Activated CD4-positive, alpha-beta T cell treated with anti-CD3 and anti-CD28 coated beads, Interleukin-2, amount 10 ng/mL, durations not matched to agents 24 days and 14 days (primary cell): ENCODE measurements at regions of chrX and their contacts with region 1.

Region 1: GRCh38 chrX:136268051-136269048 is 17.1 kb upstream of the MAP7D3 start:
- DNase-seq: peak; percentile 83
- H3K4me3 Mint-ChIP-seq: no peak overlapping the region
- H3K27ac Mint-ChIP-seq: no peak overlapping the region
- H3K4me1 Mint-ChIP-seq: peaks cover 4% of the 10 kb centered on the region
- H3K27me3 Mint-ChIP-seq: no peaks in the 10 kb centered on the region

Region 2: DNA sequence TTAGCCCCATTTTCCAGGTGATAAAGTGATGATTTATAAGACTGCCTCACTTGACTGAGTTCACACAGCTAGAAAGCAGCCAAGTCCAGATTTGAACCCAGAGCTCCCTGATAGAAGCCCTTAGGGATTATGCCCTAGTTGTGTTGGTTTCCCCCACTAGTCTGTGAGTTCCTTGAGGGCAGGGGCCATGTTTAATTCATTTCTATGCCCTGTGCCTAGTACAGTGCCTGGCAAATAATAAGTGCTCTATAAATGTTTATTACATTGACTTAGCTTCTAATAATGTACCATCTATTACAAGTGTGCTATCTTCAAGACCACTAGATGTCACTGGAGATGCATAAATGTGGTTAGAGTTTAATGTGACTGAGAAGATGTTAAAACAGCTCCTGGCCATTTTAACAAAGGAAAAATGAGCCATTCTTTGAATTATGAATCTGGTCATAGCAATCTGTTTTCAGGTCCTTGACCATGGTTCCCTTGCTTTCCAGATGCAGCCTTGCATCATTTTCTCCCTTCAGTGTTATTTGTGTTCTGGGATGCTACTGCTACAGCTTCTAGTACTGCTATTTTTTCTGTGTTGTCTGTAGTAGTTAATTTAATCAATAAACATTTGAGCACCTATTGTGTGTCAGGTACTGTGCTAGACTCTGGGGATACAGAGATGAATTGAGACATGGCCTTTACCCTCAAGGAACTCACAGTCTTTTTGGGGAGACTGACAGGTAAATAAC is 239.9 kb before region 1 on chrX:
- intact Hi-C with region 1: loop called (anchors 2 kb)
- DNase-seq: peak; percentile 62
- H3K4me3 Mint-ChIP-seq: no peak overlapping the region
- H3K27ac Mint-ChIP-seq: no peak overlapping the region
- H3K4me1 Mint-ChIP-seq: no peaks in the 10 kb centered on the region
- H3K27me3 Mint-ChIP-seq: no peaks in the 10 kb centered on the region

Region 3: GRCh38 chrX:136039968-136040367 is 228.4 kb before region 1 on chrX:
- intact Hi-C with region 1: no loop called
- DNase-seq: no peak
- H3K4me3 Mint-ChIP-seq: no peak overlapping the region
- H3K27ac Mint-ChIP-seq: no peak overlapping the region
- H3K4me1 Mint-ChIP-seq: no peaks in the 10 kb centered on the region
- H3K27me3 Mint-ChIP-seq: no peaks in the 10 kb centered on the region

Region 4: GRCh38 chrX:136162831-136163570 is 105.3 kb before region 1 on chrX:
- intact Hi-C with region 1: loop called (anchors 10 kb)
- DNase-seq: peak; percentile 82
- H3K4me3 Mint-ChIP-seq: no peak overlapping the region
- H3K27ac Mint-ChIP-seq: no peak overlapping the region
- H3K4me1 Mint-ChIP-seq: peaks cover 7% of the 10 kb centered on the region
- H3K27me3 Mint-ChIP-seq: no peaks in the 10 kb centered on the region

Region 5: DNA sequence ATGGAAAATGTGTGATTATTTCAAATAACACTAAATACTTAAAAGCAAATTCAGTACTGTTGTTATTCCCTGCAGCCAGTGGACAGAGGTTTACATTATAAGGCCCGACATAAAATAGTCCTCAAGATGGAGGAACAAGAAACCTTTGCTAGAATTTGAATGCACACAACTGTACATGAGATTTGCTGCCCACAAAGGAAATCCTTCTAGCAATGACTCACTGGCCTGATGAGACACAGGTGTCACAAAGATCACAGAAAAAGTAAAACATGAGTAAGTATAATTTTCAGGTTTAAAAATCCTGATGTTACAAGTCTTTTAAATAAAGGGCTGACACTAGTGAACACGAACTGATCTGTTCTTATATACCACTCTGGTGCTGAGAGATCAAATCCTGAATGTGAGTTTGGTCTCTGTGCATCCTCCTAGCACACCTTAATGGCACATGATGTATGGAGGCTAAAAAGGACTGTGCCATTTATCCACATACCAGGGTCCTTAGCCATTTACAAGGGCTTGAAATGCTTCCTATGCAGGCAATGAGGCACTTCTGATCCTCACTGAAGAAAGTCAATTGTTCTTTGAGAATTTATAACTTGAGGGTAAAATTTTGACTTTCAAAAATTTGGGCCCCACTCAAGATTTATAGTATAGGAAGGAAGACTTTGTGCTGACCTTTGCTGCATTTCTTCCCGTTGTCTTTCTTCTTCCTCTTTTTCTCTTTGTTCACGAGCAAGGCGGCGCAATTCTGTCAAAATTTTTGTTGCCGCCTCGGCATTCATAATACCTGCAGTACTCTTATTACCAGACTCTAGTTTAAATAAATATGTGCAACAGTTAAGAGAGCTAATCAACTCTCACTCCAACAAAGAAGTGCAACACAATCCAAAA is 40.2 kb before region 1 on chrX:
- intact Hi-C with region 1: loop called (anchors 5 kb)
- DNase-seq: peak; percentile 64
- H3K4me3 Mint-ChIP-seq: peak overlapping the region; percentile 36
- H3K27ac Mint-ChIP-seq: peak overlapping the region; percentile 48
- H3K4me1 Mint-ChIP-seq: peaks cover 20% of the 10 kb centered on the region
- H3K27me3 Mint-ChIP-seq: no peaks in the 10 kb centered on the region